GM18951 (cell line): ENCODE measurements at regions of chr4 and their contacts with region 1.

Region 1: DNA sequence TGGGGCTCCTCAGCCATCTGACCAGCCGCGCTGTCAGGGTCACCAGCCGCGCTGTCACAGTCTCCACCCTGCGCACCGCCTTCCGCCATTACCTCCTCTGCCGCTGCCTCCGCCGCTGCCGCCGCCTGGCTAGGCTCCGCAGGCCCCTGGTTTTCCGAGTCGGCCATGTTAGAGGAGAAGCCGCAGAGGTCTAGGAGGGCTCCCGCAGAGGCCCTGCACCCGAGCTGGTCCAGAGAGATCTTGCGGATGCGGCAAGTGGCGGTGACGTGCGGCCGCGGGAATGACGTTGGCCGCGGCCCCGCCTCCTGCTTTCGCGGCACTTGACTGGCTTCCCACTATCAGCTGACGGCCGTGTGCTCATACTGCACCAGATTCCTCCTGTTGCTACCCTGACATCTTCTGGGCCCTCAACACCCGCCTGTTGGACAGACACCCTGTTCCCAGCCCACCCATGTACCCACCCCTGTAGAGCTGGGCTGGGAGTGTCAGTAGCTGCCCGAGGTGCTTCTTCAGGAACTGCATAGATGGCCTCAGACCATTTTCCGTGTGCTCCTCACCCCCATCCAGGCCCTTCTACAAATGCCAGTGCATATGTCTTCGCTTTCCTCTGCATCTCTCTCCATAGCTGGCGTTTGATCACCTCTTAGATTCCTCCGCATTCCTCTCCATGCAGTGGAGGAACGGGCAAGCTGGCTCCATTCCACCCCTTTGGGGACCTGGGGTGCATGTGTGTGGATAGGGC is at the start of gene NAP1L5:
- POLR2A ChIP-seq: peak; percentile 55

Region 2: GRCh38 chr4:88573995-88574394 is 123.8 kb before region 1 on chr4:
- in situ Hi-C with region 1: no loop called
- POLR2A ChIP-seq: no peak

Region 3: DNA sequence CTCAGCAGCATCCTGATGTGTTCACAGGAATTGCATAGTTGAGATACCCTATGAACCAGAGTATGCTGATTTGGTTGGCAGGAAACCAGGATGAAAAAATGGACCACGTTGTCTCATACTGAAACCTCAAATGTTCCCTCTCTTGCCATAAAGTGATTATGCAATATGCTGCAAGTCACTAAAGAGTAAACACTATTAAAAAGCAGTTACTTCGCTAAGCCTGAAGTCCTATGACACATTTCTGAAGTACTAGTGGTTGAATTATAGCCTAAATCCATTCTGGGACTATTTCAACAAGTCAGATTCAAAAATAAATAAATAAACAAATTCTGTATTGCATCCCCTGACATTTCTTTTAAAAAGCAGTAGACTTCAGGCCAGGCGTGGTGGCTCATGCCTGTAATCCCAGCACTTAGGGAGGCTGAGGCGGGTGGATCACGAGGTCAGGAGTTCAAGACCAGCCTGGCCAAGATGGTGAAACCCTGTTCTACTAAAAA is 105.9 kb after region 1 on chr4:
- in situ Hi-C with region 1: no loop called
- POLR2A ChIP-seq: no peak

Region 4: DNA sequence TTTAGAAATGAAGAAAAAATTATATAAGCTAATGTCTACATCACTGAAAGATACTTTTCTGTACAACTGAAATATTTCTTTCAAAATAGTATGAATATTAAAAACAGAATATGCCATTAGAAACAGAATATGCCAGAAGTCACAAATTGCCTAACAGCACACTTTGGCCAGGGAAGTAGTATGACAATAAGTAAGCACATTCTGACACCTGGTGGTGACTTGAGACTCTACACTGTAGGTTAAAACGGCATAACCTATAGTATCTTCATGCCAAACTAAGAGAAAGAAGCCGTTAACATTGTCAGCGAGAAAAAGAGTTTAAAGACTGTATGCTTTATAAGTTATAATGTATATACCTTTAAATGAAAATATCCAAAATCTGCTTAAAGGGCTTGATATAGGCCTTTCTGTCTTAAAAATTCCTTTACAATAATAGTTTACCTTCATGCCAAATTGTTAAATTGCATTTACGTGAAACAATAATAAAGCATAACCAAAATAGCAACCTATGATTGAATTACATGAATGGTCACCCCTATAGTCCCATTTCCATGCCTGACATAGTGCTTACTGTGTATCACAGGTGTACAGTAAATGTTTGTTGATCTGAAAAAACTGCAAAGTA is 326.4 kb after region 1 on chr4:
- in situ Hi-C with region 1: loop called (anchors 25 kb)
- POLR2A ChIP-seq: no peak